Activated naive CD4-positive, alpha-beta T cell treated with anti-CD3 and anti-CD28 coated beads for 36 hours (primary cell): ENCODE measurements at regions of chr13 and their contacts with region 1.

Region 1: DNA sequence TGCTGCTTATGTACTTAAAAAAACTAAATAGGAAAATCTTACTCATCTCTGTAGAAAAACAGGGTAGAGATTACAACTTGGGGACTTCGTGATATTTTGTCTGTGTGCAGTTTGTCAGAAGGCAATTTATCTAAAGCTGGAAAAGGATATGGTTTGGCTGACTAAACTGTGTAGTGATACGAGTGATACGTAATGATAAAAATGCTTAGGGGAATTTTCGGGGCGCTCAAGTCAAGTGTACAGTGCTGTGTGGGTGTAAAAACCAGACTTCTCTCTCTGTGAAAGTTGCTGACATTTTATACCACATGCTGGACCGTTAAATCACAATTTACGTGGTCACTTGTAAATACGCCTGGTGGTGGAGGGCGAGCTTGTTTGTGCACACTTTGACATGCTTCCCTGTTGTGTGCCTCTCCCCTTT is 221.7 kb downstream of the KCNRG start:
- DNase-seq: peak; percentile 62
- H3K4me3 Mint-ChIP-seq: no peak overlapping the region
- H3K27ac Mint-ChIP-seq: peak overlapping the region; percentile 61
- H3K4me1 Mint-ChIP-seq: peaks cover 48% of the 10 kb centered on the region
- H3K27me3 Mint-ChIP-seq: peaks cover 12% of the 10 kb centered on the region

Region 2: DNA sequence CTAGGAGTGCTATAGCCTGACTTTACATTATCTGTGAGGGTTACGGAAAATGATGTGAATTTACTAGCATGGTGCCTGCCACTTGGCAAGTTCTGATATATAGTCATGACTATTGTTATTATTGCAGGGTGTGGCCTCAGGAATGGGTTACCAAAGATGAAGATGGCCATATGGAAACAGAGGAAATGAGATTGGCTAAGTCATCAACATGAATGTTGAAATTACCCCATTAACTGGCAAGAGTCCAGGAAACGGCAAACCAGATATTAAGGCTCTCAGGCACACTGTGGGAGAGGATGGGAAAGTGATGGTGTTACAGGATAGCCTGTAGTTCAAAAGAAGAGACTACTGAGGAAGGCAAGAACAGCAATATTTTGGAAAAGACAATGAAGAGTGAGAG is 38.4 kb before region 1 on chr13:
- CTCF ChIA-PET with region 1: no interaction called
- intact Hi-C with region 1: no loop called
- DNase-seq: no peak
- H3K4me3 Mint-ChIP-seq: no peak overlapping the region
- H3K27ac Mint-ChIP-seq: no peak overlapping the region
- H3K4me1 Mint-ChIP-seq: no peaks in the 10 kb centered on the region
- H3K27me3 Mint-ChIP-seq: peaks cover 5% of the 10 kb centered on the region

Region 3: DNA sequence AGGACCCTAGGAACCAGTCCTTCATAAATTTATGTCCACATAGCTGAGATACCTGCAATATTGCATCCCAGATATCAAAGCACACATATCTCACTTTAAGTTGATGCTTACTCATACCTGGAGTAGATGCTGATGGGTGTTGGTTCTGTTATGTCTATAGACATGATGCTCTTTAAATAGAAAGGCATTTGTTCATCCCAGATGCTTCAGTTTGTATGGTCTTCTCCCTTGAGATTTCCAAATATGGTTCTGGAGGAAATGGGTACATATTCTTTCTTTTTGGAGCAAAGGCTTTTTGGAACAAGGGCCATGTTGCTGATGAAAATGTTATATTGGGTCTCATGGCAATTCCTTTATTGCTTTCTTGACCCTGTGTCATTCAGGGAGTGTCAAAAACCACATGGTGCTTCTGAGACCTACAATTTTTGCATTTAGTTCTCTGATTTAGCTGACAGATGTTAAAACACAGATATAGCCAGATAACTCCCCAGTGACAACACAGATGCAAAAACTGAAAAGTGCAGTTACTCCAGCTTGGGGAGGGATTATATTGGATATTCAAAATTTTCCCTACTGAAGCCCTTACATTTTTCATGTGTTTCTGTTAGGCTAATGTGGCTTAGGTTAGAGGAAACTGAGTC is 10.3 kb before region 1 on chr13:
- CTCF ChIA-PET with region 1: interaction called, 5 read pairs
- intact Hi-C with region 1: loop called (anchors 1 kb)
- DNase-seq: no peak
- H3K4me3 Mint-ChIP-seq: no peak overlapping the region
- H3K27ac Mint-ChIP-seq: no peak overlapping the region
- H3K4me1 Mint-ChIP-seq: peaks cover 54% of the 10 kb centered on the region
- H3K27me3 Mint-ChIP-seq: peaks cover 15% of the 10 kb centered on the region

Region 4: GRCh38 chr13:50425772-50426171 is 188.9 kb after region 1 on chr13:
- CTCF ChIA-PET with region 1: no interaction called
- intact Hi-C with region 1: loop called (anchors 2 kb)
- DNase-seq: no peak
- H3K4me3 Mint-ChIP-seq: no peak overlapping the region
- H3K27ac Mint-ChIP-seq: no peak overlapping the region
- H3K4me1 Mint-ChIP-seq: peaks cover 23% of the 10 kb centered on the region
- H3K27me3 Mint-ChIP-seq: no peaks in the 10 kb centered on the region